ENCODE measurements at regions of chr7 and their contacts with region 1.

Region 1: DNA sequence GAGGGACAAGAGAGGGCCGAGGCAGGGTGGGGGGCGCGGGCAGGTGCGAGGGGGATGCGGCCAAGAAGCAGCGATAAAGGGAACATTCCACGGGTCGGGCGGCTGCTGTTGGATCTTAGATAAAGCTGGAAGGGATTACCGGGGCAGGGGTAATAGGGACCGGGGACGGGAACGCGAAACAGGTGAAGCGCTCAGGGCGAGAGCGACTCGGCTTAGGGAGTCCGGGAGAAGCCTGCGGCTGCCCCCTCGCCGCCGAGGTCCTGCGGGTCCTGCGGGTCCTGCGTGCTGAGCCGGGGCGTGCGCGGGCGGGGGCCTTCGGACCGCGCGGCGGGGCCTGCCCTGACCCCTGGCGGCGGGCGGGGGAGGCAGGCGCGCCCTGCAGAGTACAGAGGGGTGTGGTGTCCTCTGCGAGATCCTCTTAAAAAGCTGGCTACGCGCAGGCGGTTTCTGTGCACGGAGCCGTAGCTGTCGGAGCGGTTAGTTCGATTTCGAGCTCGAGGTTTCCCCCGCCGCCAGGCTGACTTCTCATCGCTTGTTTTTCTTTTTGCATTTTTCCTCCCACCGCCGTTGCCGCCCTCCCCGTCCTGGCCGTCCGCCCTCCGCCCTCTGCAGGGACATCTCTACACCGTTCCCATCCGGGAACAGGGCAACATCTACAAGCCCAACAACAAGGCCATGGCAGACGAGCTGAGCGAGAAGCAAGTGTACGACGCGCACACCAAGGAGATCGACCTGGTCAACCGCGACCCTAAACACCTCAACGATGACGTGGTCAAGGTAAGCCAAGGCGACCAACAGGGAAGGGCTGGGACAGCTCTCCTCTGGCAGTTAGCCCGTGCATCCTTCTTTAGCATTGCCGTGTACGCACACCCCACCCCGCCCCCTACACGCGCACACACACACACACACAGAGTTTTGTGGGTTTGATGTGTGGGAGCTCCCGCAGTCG is 1.4 kb downstream of the CAV1 start:
- DNase-seq: peak; percentile 84
- H3K4me3 ChIP-seq: peak overlapping the region; percentile 74 to 98 (median 90)
- H3K27ac ChIP-seq: peak overlapping the region; percentile 97
- H3K4me1 ChIP-seq: peaks cover 72% of the 10 kb centered on the region
- H3K27me3 ChIP-seq: no peaks in the 10 kb centered on the region
- CTCF ChIP-seq: peak; percentile 72 to 88
- POLR2A ChIP-seq: peak; percentile 81

Region 2: GRCh38 chr7:116242178-116242577 is 284.0 kb before region 1 on chr7:
- CTCF ChIA-PET with region 1: interaction called, 10 read pairs
- POLR2A ChIA-PET with region 1: no interaction called
- dilution Hi-C with region 1: no loop called
- intact Hi-C with region 1: no loop called
- DNase-seq: no peak
- H3K4me3 ChIP-seq: no peak overlapping the region
- H3K27ac ChIP-seq: no peak overlapping the region
- H3K4me1 ChIP-seq: peaks cover 8% of the 10 kb centered on the region
- H3K27me3 ChIP-seq: no peaks in the 10 kb centered on the region
- CTCF ChIP-seq: no peak
- POLR2A ChIP-seq: no peak

Region 3: GRCh38 chr7:116316833-116317612 is 209.2 kb before region 1 on chr7:
- CTCF ChIA-PET with region 1: interaction called, 4 read pairs
- POLR2A ChIA-PET with region 1: no interaction called
- dilution Hi-C with region 1: no loop called
- intact Hi-C with region 1: loop called (anchors 1 kb)
- DNase-seq: peak; percentile 99
- H3K4me3 ChIP-seq: peak overlapping the region in 2 of 3 experiments; percentile 12 to 57
- H3K27ac ChIP-seq: peak overlapping the region; percentile 97
- H3K4me1 ChIP-seq: peaks cover 63% of the 10 kb centered on the region
- H3K27me3 ChIP-seq: no peaks in the 10 kb centered on the region
- CTCF ChIP-seq: no peak
- POLR2A ChIP-seq: peak; percentile 15

Region 4: GRCh38 chr7:116354546-116355408 is 171.4 kb before region 1 on chr7:
- CTCF ChIA-PET with region 1: interaction called, 8 read pairs
- POLR2A ChIA-PET with region 1: interaction called, 3 read pairs
- dilution Hi-C with region 1: loop called (anchors 25 kb)
- intact Hi-C with region 1: loop called (anchors 1 kb)
- DNase-seq: peak; percentile 99
- H3K4me3 ChIP-seq: peak overlapping the region in 1 of 3 experiments; percentile 14
- H3K27ac ChIP-seq: peak overlapping the region; percentile 99
- H3K4me1 ChIP-seq: peaks cover 63% of the 10 kb centered on the region
- H3K27me3 ChIP-seq: no peaks in the 10 kb centered on the region
- CTCF ChIP-seq: no peak
- POLR2A ChIP-seq: no peak

Region 5: DNA sequence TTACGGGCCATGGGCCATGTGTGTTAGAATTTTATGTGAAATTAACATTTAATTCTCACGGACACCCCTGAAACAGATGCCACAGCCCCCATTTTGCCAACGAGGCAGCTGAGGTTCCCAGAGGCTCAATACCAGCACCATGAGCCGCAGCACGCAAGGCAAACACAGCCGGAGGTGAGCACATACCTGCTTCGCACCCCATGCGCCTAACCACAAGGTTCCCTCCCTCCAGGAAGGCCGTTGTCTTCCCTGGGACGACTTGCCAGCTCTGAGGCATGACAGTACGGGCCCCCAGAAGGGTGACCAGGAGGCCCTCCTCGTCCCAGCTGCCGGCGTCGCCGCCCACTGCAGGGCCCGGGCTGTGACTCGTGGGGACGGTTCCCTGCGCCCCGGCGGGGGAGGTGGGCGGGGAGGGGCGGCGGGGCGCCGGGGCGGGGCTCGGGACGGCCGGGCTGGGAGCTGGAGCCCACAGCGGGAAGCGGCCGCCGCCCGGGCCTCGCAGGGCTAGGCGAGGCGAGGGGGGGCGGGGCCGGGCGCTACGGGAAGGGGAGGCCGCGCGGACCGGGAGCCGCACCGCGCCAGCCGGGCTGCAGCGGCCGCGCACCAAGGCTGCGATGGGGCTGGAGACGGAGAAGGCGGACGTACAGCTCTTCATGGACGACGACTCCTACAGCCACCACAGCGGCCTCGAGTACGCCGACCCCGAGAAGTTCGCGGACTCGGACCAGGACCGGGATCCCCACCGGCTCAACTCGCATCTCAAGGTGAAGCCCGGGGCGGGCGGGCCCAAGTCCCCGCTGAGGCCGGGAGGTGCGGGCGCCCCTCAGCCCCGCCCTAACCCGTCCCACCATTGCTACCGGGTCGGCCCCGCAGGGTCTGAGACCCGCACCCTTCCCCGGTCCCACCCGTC is 26.8 kb before region 1 on chr7 and contains the start of gene CAV2:
- CTCF ChIA-PET with region 1: interaction called, 14 read pairs
- POLR2A ChIA-PET with region 1: interaction called, 3 read pairs
- dilution Hi-C with region 1: no loop called
- intact Hi-C with region 1: loop called (anchors 1 kb)
- DNase-seq: peak; percentile 63
- H3K4me3 ChIP-seq: peak within 1 kb of the TSS; percentile 59 to 86 (median 82)
- H3K27ac ChIP-seq: peak within 1 kb of the TSS; percentile 83
- H3K4me1 ChIP-seq: peaks cover 31% of the 10 kb centered on the region
- H3K27me3 ChIP-seq: no peaks in the 10 kb centered on the region
- CTCF ChIP-seq: no peak
- POLR2A ChIP-seq: peak; percentile 76
- total RNA-seq, gene CAV2: 146 and 179 TPM in 2 replicates

Region 6: GRCh38 chr7:116582806-116583444 is 56.7 kb after region 1 on chr7:
- CTCF ChIA-PET with region 1: interaction called, 64 read pairs
- POLR2A ChIA-PET with region 1: interaction called, 3 read pairs
- dilution Hi-C with region 1: no loop called
- intact Hi-C with region 1: no loop called
- DNase-seq: peak; percentile 32
- H3K4me3 ChIP-seq: no peak overlapping the region
- H3K27ac ChIP-seq: no peak overlapping the region
- H3K4me1 ChIP-seq: peaks cover 25% of the 10 kb centered on the region
- H3K27me3 ChIP-seq: no peaks in the 10 kb centered on the region
- CTCF ChIP-seq: no peak
- POLR2A ChIP-seq: no peak

Region 7: GRCh38 chr7:116984917-116985316 is 458.7 kb after region 1 on chr7:
- CTCF ChIA-PET with region 1: no interaction called
- POLR2A ChIA-PET with region 1: no interaction called
- dilution Hi-C with region 1: no loop called
- intact Hi-C with region 1: no loop called
- DNase-seq: peak; percentile 45
- H3K4me3 ChIP-seq: no peak overlapping the region
- H3K27ac ChIP-seq: no peak overlapping the region
- H3K4me1 ChIP-seq: no peaks in the 10 kb centered on the region
- H3K27me3 ChIP-seq: no peaks in the 10 kb centered on the region
- CTCF ChIP-seq: peak; percentile 29 to 44
- POLR2A ChIP-seq: no peak

Region 8: DNA sequence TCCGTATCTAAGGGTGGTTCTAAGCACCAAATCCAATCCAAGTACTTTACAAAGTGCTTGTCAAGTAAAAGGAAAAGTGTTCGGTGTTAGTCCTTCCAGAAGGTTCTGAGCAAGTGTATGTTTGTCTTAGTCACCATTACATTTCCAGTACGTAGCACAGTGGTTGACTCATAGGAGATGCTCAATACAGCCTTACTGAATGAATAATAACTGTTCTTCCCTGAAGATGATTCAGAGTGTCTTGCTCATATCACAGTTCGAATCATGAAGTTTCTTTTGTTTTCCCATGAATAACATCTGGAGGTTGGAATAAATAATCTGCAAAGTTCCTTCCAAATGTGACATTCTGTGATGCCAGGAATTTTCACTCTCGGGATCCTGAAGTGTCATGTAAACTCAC is 743.2 kb after region 1 on chr7:
- CTCF ChIA-PET with region 1: no interaction called
- POLR2A ChIA-PET with region 1: no interaction called
- dilution Hi-C with region 1: no loop called
- intact Hi-C with region 1: no loop called
- DNase-seq: peak; percentile 76
- H3K4me3 ChIP-seq: no peak overlapping the region
- H3K27ac ChIP-seq: peak overlapping the region; percentile 72
- H3K4me1 ChIP-seq: peaks cover 14% of the 10 kb centered on the region
- H3K27me3 ChIP-seq: no peaks in the 10 kb centered on the region
- CTCF ChIP-seq: no peak
- POLR2A ChIP-seq: no peak